ENCODE measurements at regions of chr13 and their contacts with region 1.

Region 1: GRCh38 chr13:21777813-21778212 is 106.9 kb downstream of the FGF9 start:
- DNase-seq: no peak
- H3K4me3 ChIP-seq: no peak overlapping the region
- H3K4me1 ChIP-seq: no peaks in the 10 kb centered on the region
- H3K27me3 ChIP-seq: no peaks in the 10 kb centered on the region

Region 2: DNA sequence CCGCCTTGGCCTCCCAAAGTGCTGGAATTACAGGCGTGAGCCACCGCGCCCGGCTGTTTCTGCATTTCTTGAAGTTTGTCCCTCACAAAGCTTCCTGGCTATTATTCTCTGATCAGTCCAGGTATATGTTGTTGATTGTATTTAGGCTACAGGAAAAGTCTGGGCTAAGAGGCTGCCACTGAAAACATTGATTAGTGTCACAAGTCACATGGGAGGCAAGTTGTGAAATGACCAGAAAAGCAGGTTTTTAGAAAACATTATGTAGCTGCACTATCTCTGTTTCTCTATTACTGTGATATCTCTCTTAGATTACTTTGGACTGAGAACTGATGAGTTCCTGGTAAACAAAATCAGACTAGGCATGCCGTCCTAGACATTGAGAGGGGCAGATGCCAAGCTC is 302.7 kb before region 1 on chr13:
- in situ Hi-C with region 1: no loop called
- DNase-seq: no peak
- H3K4me3 ChIP-seq: no peak overlapping the region
- H3K4me1 ChIP-seq: peaks cover 3% of the 10 kb centered on the region
- H3K27me3 ChIP-seq: no peaks in the 10 kb centered on the region

Region 3: GRCh38 chr13:21511849-21512248 is 266.0 kb before region 1 on chr13:
- in situ Hi-C with region 1: no loop called
- DNase-seq: no peak
- H3K4me3 ChIP-seq: no peak overlapping the region
- H3K4me1 ChIP-seq: no peaks in the 10 kb centered on the region
- H3K27me3 ChIP-seq: no peaks in the 10 kb centered on the region

Region 4: DNA sequence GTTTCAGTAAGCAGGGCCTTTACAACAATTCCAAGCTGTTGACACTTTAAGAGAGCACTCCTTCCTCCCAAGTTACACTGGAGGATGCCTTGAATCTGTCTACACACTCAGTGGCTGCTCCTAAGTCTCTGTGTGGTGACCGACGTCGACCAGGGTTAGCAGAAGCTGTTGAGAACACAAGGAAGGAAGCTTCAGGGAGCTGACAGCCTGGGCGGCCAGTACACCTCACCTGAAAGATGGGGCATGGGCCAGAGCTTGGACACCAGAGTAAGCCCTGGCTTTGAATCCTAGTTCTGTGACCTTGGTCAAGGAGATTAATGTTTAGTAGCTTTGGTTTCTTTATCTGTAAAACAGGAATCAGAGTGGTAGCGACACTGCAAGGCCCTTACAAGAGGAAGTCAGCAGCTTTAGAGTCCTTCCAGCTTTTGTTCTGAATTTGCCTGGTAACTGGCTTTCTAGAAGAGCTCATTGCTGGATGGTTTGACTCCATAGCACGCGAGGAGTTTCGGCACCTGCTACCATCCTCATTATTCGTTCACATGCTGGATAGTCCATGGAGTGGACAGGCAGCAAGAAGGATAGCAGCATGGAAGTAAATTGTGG is 107.3 kb after region 1 on chr13:
- in situ Hi-C with region 1: loop called (anchors 25 kb)
- DNase-seq: no peak
- H3K4me3 ChIP-seq: no peak overlapping the region
- H3K4me1 ChIP-seq: no peaks in the 10 kb centered on the region
- H3K27me3 ChIP-seq: no peaks in the 10 kb centered on the region

Region 5: DNA sequence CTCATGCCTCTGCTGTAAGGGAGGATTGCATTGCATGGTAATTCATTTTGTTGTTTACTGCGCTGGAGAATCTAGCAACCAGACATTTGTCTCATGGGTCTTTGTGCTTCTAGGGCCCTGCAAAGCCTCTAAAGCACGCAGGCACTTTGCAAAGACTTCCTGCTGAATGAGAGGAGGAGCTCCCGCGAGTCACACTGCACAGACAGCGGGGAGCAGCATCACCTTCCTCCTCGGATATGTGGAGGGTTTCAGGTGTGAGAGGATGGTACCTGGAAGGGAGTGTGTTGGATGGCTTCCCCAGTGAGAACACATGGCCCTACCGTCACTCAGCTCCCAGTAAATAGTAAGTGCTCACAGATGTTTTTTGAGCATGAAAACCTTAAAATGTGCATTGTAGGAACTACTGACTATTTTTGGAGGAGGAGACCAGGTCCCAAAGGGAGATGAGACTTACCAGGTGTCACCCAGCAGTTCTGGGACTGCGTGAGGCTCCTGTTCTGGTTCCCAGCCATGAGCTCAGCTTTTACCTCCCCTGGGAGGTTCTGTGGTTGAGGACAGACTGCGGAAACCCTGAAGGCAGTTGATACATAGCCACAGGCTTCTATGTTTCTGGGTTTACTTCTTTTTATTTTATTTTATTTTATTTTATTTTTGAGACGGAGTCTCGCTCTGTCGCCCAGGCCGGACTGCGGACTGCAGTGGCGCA is 171.1 kb after region 1 on chr13:
- in situ Hi-C with region 1: no loop called
- DNase-seq: no peak
- H3K4me3 ChIP-seq: no peak overlapping the region
- H3K4me1 ChIP-seq: no peaks in the 10 kb centered on the region
- H3K27me3 ChIP-seq: no peaks in the 10 kb centered on the region

Measured in HAP-1 (cell line).